HEK293 (cell line): ENCODE measurements at regions of chr15 and their contacts with region 1.

Region 1: DNA sequence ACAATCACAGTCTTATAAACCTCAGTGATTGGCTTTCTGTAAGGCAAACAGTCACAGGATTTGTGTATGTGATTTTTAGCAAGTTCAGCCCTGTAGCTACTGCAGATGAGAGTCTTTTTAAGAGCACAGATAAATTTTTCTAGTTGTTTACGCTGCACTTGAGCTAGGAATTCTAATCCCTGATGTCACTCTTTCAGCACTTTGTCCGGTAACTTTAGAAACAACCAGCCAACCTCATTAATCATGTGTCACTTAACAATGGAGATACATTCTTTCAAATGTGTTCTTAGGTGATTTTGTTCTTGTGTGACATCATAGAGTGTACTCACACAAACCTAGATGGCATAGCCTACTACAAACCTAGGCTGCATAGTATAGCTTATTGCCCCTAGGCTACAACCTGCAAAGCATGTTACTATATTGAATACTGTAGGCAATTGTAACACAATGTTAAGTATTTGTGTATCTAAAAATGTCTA is 36.8 kb upstream of the GOLGA6L2 start:
- H3K4me3 ChIP-seq: no peak overlapping the region
- H3K27ac ChIP-seq: no peak overlapping the region
- H3K4me1 ChIP-seq: peaks cover 5% of the 10 kb centered on the region; the same call in 1 of the 2 replicates
- CTCF ChIP-seq: no peak

Region 2: DNA sequence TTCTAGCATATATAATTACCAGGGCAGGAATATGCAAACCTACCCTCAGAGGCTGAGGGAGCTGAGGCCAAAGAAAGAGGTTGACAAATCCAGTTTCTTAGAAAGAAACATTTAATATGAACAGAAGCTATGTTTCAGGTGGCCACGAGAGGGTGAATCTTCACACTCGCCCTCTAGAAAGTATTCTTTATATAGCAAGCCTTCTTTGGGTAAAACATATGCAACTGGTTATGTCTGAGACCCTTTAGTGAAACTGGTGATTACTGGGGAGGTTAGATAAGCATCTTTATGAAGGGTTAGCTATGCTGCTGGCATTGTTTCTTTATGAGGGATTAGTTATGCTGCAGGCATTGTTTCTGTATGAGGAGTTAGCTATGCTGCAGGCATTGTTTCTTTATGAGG is 13.9 kb after region 1 on chr15:
- CTCF ChIA-PET with region 1: interaction called, 12 read pairs
- POLR2A ChIA-PET with region 1: no interaction called
- H3K4me3 ChIP-seq: no peak overlapping the region
- H3K27ac ChIP-seq: no peak overlapping the region
- H3K4me1 ChIP-seq: no peaks in the 10 kb centered on the region
- CTCF ChIP-seq: no peak